ENCODE measurements at regions of chr14 and their contacts with region 1.

Region 1: DNA sequence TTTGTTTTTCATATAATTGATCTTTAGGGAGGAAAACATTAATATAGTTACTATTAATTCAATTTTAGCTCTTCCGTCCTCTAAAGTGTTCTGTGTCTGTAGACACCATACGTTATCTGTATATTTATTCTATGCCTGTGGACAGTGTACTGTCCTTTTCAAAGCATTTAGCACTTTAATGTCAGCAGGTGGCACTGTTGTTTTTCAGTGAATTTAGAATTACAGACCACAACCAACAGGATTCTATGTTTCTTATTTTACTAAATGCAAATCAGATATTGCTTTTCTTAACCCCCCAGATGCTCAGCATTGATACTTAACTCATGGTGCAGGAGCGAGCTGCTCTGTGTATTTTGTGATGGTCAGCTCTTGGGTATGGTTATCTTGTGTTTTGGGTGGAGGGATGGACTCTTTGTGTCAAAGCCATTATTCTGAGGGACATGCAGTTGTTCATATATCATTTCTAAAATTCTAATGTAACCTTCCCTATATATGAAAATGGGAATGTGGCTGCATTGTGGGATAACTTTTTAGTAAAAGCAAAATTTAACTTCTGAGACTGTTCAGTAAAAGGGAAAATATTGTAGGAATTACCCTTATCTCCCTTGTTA is 65.2 kb downstream of the PAPOLA start:
- DNase-seq: peak; percentile 46
- H3K4me3 ChIP-seq: no peak overlapping the region
- H3K27ac ChIP-seq: no peak overlapping the region
- H3K4me1 ChIP-seq: no peaks in the 10 kb centered on the region
- H3K27me3 ChIP-seq: no peaks in the 10 kb centered on the region
- CTCF ChIP-seq: peak; percentile 38 to 40
- POLR2A ChIP-seq: no peak

Region 2: DNA sequence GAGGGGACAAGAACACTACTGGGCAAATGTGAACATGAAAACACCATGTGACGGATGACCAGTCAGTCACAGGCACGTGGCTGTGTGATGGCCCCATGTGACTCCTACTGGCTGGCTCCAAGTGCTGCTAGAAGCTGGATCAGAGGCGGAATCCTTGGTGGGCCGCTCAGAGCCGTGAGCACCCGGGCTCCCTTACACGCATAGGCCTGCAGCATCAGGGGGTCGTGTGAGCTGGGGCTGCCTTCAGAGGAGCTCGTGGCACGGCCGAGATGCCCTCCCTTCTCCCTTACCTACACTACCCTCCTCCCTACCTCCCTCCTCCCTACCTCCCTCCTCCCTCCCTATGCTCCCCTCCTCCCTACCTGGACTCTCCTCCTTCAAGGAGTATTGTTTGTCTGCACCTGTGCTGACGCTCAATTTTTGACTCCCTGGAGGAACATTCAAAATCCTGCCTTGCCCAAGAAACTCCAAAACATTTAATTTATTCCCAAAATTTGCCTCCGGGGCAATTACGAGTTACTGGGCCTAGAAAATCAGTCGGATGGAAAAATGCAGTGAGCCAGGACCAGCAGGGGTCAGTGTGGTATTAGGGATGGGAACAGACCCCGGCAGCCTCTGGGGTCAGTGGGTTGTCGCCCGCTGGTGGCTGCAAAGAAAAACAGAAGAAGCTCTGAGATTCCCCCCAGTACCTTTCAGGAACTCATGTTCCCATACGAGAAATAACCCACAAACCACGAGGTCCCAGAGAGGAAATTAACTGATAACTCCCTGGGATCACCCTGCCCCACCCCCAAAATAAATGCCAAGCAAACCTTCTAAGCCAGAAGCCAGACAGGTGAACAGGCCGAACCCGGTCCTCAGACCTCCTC is 467.0 kb before region 1 on chr14:
- CTCF ChIA-PET with region 1: no interaction called
- POLR2A ChIA-PET with region 1: no interaction called
- dilution Hi-C with region 1: no loop called
- intact Hi-C with region 1: loop called (anchors 5 kb)
- DNase-seq: peak; percentile 64
- H3K4me3 ChIP-seq: no peak overlapping the region
- H3K27ac ChIP-seq: no peak overlapping the region
- H3K4me1 ChIP-seq: no peaks in the 10 kb centered on the region
- H3K27me3 ChIP-seq: no peaks in the 10 kb centered on the region
- CTCF ChIP-seq: peak; percentile 81 to 83
- POLR2A ChIP-seq: no peak

Region 3: GRCh38 chr14:96554315-96554910 is 13.0 kb before region 1 on chr14:
- CTCF ChIA-PET with region 1: interaction called, 10 read pairs
- POLR2A ChIA-PET with region 1: no interaction called
- dilution Hi-C with region 1: no loop called
- intact Hi-C with region 1: no loop called
- DNase-seq: no peak
- H3K4me3 ChIP-seq: no peak overlapping the region
- H3K27ac ChIP-seq: no peak overlapping the region
- H3K4me1 ChIP-seq: peaks cover 2% of the 10 kb centered on the region
- H3K27me3 ChIP-seq: no peaks in the 10 kb centered on the region
- CTCF ChIP-seq: no peak
- POLR2A ChIP-seq: no peak

Region 4: DNA sequence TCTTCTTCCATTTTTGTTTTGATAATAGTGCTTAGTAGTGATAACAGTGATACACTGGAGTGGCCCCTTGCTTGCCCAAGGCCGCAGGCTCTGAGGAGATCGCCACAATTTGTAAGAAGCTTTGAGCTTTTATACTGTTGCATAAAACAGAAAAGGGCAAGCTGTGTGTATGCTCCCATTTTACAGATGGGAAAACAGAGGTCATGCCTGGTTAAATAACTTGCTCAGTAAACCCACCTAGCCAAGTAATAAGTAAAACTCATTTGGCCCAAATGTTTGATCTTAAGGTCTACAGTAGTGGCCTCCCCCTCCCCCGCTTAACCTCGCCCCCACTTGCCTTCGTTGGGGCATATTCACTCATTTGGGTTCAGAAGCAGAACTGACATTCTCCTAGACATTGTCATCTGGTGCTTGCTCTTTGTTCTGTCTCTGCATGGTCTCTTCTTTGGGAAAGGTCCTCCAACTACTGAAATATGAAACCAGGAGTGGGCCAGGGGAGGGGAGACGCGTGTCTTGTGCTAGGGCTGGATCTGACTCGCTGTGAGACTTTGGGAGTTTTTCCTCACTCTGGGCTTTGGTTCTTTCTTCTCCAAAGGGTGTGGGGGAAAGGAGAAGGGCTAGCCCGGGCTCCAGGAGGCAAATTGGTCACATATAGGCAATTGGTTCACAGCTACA is 22.9 kb after region 1 on chr14:
- CTCF ChIA-PET with region 1: interaction called, 10 read pairs
- POLR2A ChIA-PET with region 1: no interaction called
- dilution Hi-C with region 1: no loop called
- intact Hi-C with region 1: no loop called
- DNase-seq: no peak
- H3K4me3 ChIP-seq: no peak overlapping the region
- H3K27ac ChIP-seq: no peak overlapping the region
- H3K4me1 ChIP-seq: no peaks in the 10 kb centered on the region
- H3K27me3 ChIP-seq: no peaks in the 10 kb centered on the region
- CTCF ChIP-seq: no peak
- POLR2A ChIP-seq: no peak

Region 5: DNA sequence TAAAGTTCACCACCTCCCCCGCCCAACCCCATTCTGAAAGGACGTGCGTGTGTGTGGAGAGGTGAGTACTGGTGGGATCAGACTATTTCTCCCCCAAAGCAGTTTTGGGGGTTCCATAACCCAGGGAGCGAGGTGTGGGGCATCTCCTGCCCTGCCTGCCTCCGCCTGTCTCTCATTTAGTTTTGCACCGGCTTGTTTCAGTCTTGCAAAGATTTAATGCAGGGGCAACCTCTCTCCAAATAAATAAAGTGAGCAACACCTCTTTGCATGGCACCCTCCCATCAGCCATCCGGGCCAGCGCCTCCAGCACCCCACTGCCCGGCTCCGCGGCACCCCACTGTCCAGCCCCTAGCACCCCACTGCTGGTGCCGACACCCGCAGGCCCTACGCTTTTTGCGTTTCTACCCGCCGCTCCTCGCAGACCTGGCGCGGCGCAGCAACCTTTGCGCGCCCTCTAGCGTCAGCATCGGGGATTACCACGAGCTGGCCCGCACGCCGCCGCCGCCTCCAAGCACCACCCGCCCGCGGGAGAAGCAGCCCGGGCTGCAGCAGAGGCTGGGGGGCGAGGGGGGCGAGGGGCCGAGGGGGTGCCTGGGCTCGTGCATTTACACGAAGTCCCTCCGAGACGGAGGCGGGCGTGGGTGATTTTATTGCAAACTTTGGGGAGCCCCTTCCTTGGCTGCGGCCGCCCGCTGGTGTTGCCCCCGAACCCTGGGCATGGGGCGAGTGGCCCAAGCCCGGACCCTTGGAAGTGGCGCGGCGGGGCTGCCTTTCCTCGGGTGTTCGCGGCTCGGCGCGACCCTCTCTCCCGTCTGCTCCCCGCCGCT is 174.0 kb after region 1 on chr14:
- CTCF ChIA-PET with region 1: interaction called, 122 read pairs
- POLR2A ChIA-PET with region 1: no interaction called
- dilution Hi-C with region 1: no loop called
- intact Hi-C with region 1: loop called (anchors 1 kb)
- DNase-seq: peak; percentile 46
- H3K4me3 ChIP-seq: peak overlapping the region in 1 of 3 experiments; percentile 41
- H3K27ac ChIP-seq: no peak overlapping the region
- H3K4me1 ChIP-seq: no peaks in the 10 kb centered on the region
- H3K27me3 ChIP-seq: peaks cover 16 to 20% of the 10 kb centered on the region in 2 experiments
- CTCF ChIP-seq: peak; percentile 67 to 85
- POLR2A ChIP-seq: no peak

Region 6: GRCh38 chr14:96796851-96797581 is 229.6 kb after region 1 on chr14 and contains the start of gene VRK1:
- CTCF ChIA-PET with region 1: interaction called, 3 read pairs
- POLR2A ChIA-PET with region 1: no interaction called
- dilution Hi-C with region 1: no loop called
- intact Hi-C with region 1: loop called (anchors 5 kb)
- DNase-seq: peak; percentile 98
- H3K4me3 ChIP-seq: peak within 1 kb of the TSS; percentile 38 to 93 (median 71)
- H3K27ac ChIP-seq: peak within 1 kb of the TSS; percentile 46
- H3K4me1 ChIP-seq: peaks cover 10% of the 10 kb centered on the region
- H3K27me3 ChIP-seq: no peaks in the 10 kb centered on the region
- CTCF ChIP-seq: no peak
- POLR2A ChIP-seq: peak; percentile 63
- total RNA-seq, gene VRK1: 31.7 and 35.1 TPM in 2 replicates

Region 7: GRCh38 chr14:96852823-96853422 is 285.5 kb after region 1 on chr14:
- CTCF ChIA-PET with region 1: interaction called, 18 read pairs
- POLR2A ChIA-PET with region 1: no interaction called
- dilution Hi-C with region 1: no loop called
- intact Hi-C with region 1: no loop called
- DNase-seq: peak; percentile 49
- H3K4me3 ChIP-seq: no peak overlapping the region
- H3K27ac ChIP-seq: no peak overlapping the region
- H3K4me1 ChIP-seq: peaks cover 5% of the 10 kb centered on the region
- H3K27me3 ChIP-seq: no peaks in the 10 kb centered on the region
- CTCF ChIP-seq: peak; percentile 31 to 49
- POLR2A ChIP-seq: no peak

Measured in endothelial cell of umbilical vein (primary cell).